ENCODE measurements at regions of chr14 and their contacts with region 1.

Region 1: DNA sequence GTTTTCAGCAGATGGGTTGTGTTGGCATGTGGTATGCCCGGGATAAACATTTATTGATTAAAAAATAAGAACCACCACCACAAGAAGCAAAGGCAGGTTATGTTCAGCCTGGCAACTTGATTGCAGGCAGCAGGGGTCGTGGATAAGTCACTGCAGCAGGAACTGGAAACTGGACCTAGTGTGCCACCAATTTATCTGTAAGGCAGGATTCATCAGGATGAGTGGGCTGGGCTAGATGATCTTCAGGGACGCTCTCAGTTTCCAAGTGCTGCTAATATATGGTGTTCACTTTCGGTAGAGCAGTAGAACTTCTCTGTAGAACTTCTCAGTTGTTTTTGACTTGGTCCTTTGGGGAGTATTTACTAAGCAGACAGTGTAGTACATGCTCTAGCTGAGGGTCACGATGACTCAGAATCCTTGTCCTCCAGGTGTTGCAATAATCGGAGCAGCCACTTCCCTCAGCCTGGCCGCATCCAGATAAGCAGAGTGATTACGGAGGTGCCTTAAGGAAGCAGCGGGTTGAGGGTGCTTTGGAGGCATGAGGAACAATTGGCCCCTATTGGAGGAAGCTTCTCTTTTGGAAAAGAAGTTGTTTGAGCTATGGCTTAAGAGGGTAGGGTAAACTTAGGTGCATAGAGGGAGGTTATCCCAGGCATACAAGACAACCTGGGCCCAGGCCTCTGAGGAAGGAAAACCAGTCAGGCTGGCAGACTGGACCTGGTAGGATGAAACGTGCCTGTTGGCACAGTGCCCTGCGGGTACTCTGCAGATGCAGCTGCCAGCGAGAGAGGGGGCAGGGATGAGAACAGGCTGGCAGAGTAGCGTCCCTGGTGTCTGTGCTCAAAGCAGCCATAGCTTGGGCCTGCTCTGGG is 104.0 kb downstream of the GPR135 start:
- DNase-seq: peak; percentile 72 to 89 (median 88)
- ATAC-seq: peak; percentile 50 to 66
- H3K4me3 ChIP-seq: no peak overlapping the region
- H3K27ac ChIP-seq: peak overlapping the region; percentile 93
- H3K4me1 ChIP-seq: peaks cover 8% of the 10 kb centered on the region
- H3K27me3 ChIP-seq: no peaks in the 10 kb centered on the region

Region 2: GRCh38 chr14:59428581-59429012 is 67.4 kb after region 1 on chr14:
- intact Hi-C with region 1: loop called in 1 of 4 experiments (anchors 10 kb)
- DNase-seq: no peak
- ATAC-seq: peak in 1 of 2 donors; percentile 8
- H3K4me3 ChIP-seq: no peak overlapping the region
- H3K27ac ChIP-seq: peak overlapping the region; percentile 95
- H3K4me1 ChIP-seq: peaks cover 18% of the 10 kb centered on the region
- H3K27me3 ChIP-seq: no peaks in the 10 kb centered on the region

Region 3: GRCh38 chr14:59570114-59570513 is 209.0 kb after region 1 on chr14:
- intact Hi-C with region 1: no loop called
- DNase-seq: no peak
- ATAC-seq: no peak
- H3K4me3 ChIP-seq: no peak overlapping the region
- H3K27ac ChIP-seq: no peak overlapping the region
- H3K4me1 ChIP-seq: no peaks in the 10 kb centered on the region
- H3K27me3 ChIP-seq: no peaks in the 10 kb centered on the region

Measured in right cardiac atrium (tissue), 5 donors.